Activated CD8-positive, alpha-beta T cell treated with anti-CD3 and anti-CD28 coated beads, Interleukin-2, amount 10 ng/mL, durations not matched to agents 7 days and 5 days (primary cell): ENCODE measurements at regions of chr14 and their contacts with region 1.

Region 1: DNA sequence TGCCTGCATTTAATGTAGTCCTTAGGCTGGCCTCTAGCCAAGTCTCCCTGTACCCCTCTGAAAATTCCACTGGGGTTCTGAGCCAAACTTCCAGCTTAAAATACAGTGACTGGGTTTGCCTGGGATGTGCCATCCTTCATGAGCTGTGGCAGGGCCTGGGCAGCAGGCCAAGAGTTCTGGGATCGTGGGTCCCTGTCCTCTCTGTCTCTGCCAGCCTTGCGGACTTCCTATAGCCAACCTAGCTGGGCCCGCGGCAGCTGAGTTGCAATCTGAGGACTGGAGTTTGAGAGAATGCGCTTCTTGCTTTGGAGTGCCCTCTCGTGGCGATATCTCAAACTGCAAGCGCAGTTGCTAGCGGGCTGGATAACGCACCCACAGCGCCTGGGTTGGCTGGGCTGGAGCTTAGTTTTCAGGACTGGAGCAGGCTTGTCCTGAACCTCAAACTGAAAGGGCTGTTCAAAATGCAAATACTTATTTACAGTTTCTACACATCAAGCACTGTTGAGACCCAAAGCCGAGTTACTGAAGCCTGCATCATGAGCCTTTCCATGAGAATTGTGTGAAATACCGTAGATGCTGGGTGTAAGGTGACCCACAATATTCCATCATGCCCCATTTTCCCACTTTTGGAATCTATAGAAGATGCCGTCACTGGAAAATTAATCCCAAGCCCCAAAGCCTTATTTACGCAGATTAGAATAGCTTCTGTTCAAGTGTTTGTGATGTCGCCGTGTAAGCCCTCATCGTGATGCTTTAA is 7.3 kb upstream of the IFI27L2 start:
- DNase-seq: peak; percentile 89
- ATAC-seq: peak; percentile 85
- H3K4me3 Mint-ChIP-seq: no peak overlapping the region
- H3K27ac Mint-ChIP-seq: no peak overlapping the region
- H3K4me1 Mint-ChIP-seq: peaks cover 5% of the 10 kb centered on the region
- H3K27me3 Mint-ChIP-seq: peaks cover 21% of the 10 kb centered on the region

Region 2: DNA sequence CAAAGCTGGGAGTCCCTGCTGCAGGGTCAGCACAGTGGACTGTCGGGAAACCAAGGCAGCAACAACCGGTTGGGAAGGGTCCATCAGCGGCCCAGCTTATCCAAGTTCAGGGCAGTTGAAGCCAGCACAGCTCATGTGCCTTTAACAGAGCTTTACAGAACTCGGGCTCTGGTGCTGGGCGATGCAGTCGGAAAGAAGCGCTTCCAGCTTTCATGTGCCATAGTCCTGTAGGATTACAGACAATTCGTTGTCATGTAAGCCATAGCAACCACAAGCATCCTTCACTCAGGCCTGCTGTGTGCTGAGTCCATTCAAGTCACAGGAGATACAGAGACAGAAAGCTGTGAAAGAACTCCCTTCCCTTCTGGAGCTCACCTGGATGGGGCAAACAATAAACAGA is 213.1 kb before region 1 on chr14:
- CTCF ChIA-PET with region 1: no interaction called
- POLR2A ChIA-PET with region 1: no interaction called
- DNase-seq: no peak
- ATAC-seq: no peak
- H3K4me3 Mint-ChIP-seq: no peak overlapping the region
- H3K27ac Mint-ChIP-seq: no peak overlapping the region
- H3K4me1 Mint-ChIP-seq: no peaks in the 10 kb centered on the region
- H3K27me3 Mint-ChIP-seq: peaks cover 7% of the 10 kb centered on the region

Region 3: GRCh38 chr14:94051115-94051514 is 85.6 kb before region 1 on chr14:
- CTCF ChIA-PET with region 1: interaction called, 44 read pairs
- POLR2A ChIA-PET with region 1: interaction called, 3 read pairs
- DNase-seq: no peak
- ATAC-seq: no peak
- H3K4me3 Mint-ChIP-seq: no peak overlapping the region
- H3K27ac Mint-ChIP-seq: peak overlapping the region; percentile 56
- H3K4me1 Mint-ChIP-seq: peaks cover 35% of the 10 kb centered on the region
- H3K27me3 Mint-ChIP-seq: no peaks in the 10 kb centered on the region

Region 4: GRCh38 chr14:94080471-94081289 is 56.1 kb before region 1 on chr14 and contains the start of gene DDX24:
- CTCF ChIA-PET with region 1: interaction called, 23 read pairs
- POLR2A ChIA-PET with region 1: interaction called, 4 read pairs
- DNase-seq: peak; percentile 98
- ATAC-seq: peak; percentile 96
- H3K4me3 Mint-ChIP-seq: peak within 1 kb of the TSS; percentile 99
- H3K27ac Mint-ChIP-seq: peak within 1 kb of the TSS; percentile 99
- H3K4me1 Mint-ChIP-seq: peaks cover 52% of the 10 kb centered on the region
- H3K27me3 Mint-ChIP-seq: no peaks in the 10 kb centered on the region
- total RNA-seq, gene DDX24: 172 to 184 TPM

Region 5: DNA sequence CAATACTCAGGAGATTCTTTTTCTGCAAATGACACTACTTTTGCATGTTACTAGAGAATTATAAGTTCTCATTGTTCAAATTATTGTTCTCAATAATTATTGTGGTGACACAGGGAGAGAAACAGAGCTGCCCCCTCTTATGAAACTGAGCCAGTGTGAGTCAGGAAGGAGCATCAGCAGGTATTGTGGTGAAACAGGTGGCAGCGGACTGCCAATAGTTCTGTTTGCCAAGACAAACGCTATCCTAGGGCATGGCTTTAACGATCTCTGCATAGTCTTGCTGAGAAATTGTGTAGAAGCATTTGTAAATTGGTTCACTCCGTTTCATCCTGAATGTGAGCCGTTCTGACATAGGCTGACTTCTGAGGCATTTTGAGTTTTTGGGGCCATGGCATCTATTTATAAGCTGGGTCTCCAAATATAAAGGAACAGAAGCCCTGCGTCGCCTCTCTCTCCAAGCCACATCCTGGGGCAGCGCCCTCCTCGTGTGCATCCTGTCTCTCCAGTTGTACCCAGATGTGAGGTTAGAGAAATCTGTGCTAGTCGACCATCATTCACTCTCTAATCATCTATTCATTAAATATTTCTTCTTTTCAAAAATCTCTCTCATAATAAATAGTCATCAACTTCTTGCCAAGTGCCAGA is 21.6 kb after region 1 on chr14:
- CTCF ChIA-PET with region 1: interaction called, 16 read pairs
- POLR2A ChIA-PET with region 1: no interaction called
- DNase-seq: peak; percentile 65
- ATAC-seq: peak; percentile 83
- H3K4me3 Mint-ChIP-seq: peak overlapping the region; percentile 13
- H3K27ac Mint-ChIP-seq: peak overlapping the region; percentile 79
- H3K4me1 Mint-ChIP-seq: peaks cover 39% of the 10 kb centered on the region
- H3K27me3 Mint-ChIP-seq: peaks cover 17% of the 10 kb centered on the region

Region 6: GRCh38 chr14:94180655-94181271 is 44.0 kb after region 1 on chr14:
- CTCF ChIA-PET with region 1: interaction called, 79 read pairs
- POLR2A ChIA-PET with region 1: no interaction called
- DNase-seq: peak; percentile 27
- ATAC-seq: peak; percentile 87
- H3K4me3 Mint-ChIP-seq: peak overlapping the region; percentile 36
- H3K27ac Mint-ChIP-seq: peak overlapping the region; percentile 0
- H3K4me1 Mint-ChIP-seq: peaks cover 9% of the 10 kb centered on the region
- H3K27me3 Mint-ChIP-seq: peaks cover 50% of the 10 kb centered on the region